HEK293 (cell line): ENCODE measurements at regions of chr5 and their contacts with region 1.

Region 1: GRCh38 chr5:144170276-144171024 is at the starts of genes KCTD16 and YIPF5:
- H3K4me3 ChIP-seq: peak within 1 kb of the TSS; percentile 91
- H3K27ac ChIP-seq: peak within 1 kb of the TSS; percentile 37; the same call in 1 of the 2 replicates
- H3K4me1 ChIP-seq: peaks cover 3% of the 10 kb centered on the region; the same call in 1 of the 2 replicates
- CTCF ChIP-seq: no peak

Region 2: GRCh38 chr5:144156767-144157171 is 13.7 kb before region 1 on chr5:
- CTCF ChIA-PET with region 1: no interaction called
- POLR2A ChIA-PET with region 1: interaction called, 10 read pairs
- H3K4me3 ChIP-seq: no peak overlapping the region
- H3K27ac ChIP-seq: peak overlapping the region; percentile 44; the same call in 1 of the 2 replicates
- H3K4me1 ChIP-seq: peaks cover 16% of the 10 kb centered on the region
- CTCF ChIP-seq: no peak

Region 3: DNA sequence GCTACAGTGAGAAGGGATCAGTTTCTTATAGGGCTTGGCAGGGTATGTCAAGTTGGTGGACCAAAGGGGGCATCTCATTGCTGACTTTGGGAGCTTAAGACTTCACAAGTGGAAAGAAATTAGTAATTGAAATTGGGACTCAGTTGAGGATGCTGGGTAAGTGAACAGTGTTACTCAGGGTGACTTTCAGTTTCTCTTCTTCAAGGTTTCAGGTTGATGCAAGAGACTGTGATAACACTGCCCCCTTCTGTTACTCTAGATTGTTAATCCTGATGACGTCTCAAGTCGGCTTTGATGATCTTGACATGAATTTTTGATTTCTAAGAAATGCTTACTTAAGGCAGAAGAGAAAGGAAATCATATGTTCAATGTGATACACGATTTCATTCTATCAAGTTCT is 21.5 kb after region 1 on chr5:
- CTCF ChIA-PET with region 1: interaction called, 10 read pairs
- POLR2A ChIA-PET with region 1: interaction called, 8 read pairs
- H3K4me3 ChIP-seq: no peak overlapping the region
- H3K27ac ChIP-seq: no peak overlapping the region
- H3K4me1 ChIP-seq: peaks cover 32% of the 10 kb centered on the region
- CTCF ChIP-seq: 0 out of 2 replicates have a peak, but pooled peaks have one; percentile 20

Region 4: DNA sequence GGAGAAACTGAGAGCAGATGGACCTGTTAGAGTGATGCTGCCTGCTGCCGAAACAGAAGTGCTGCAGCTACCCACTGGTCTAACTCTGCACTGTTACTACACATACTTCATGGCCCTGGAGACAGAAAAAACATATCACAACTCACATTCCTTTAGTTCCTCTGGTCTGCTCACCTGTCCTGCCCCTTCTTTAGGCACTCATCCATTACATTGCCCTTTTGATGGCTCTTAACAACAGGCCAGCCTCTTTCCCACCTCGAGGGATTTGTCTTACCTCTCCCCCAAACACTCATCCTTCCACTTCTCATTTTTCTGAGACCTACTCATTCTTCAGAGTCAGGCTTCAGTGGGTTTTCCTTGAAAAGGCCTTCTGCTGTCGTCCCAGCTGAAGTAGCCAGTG is 49.4 kb after region 1 on chr5:
- CTCF ChIA-PET with region 1: no interaction called
- POLR2A ChIA-PET with region 1: no interaction called
- H3K4me3 ChIP-seq: no peak overlapping the region
- H3K27ac ChIP-seq: no peak overlapping the region
- H3K4me1 ChIP-seq: no peaks in the 10 kb centered on the region
- CTCF ChIP-seq: no peak

Region 5: GRCh38 chr5:144742361-144742760 is 571.9 kb after region 1 on chr5:
- CTCF ChIA-PET with region 1: no interaction called
- POLR2A ChIA-PET with region 1: no interaction called
- H3K4me3 ChIP-seq: no peak overlapping the region
- H3K27ac ChIP-seq: no peak overlapping the region
- H3K4me1 ChIP-seq: no peaks in the 10 kb centered on the region
- CTCF ChIP-seq: no peak